Ovary (tissue), 10 donors: ENCODE measurements at regions of chr1 and their contacts with region 1.

Region 1: DNA sequence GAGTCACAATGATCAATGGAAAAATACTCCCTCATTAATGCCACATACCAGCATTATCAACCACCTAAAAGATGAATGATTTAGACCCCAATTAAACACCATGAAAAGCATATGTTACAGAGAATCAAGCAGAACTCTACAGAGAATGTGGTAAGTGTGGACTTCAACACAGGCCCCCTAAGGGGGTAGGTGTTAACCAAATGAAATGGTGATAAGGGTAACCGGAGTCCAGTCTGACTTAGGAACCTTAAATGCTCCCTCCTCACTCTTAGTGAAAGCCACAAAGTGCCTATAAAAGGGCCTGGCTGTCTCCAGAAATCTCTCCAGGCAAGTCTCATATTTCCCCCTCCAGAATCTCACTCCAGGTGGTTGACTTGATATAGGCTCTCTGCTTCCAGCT is 149.2 kb upstream of the FOXD3 start:
- DNase-seq: no peak
- H3K4me3 ChIP-seq: no peak overlapping the region
- H3K27ac ChIP-seq: no peak overlapping the region
- H3K4me1 ChIP-seq: no peaks in the 10 kb centered on the region
- H3K27me3 ChIP-seq: no peaks in the 10 kb centered on the region
- CTCF ChIP-seq: no peak
- EP300 ChIP-seq: no peak
- POLR2A ChIP-seq: no peak

Region 2: DNA sequence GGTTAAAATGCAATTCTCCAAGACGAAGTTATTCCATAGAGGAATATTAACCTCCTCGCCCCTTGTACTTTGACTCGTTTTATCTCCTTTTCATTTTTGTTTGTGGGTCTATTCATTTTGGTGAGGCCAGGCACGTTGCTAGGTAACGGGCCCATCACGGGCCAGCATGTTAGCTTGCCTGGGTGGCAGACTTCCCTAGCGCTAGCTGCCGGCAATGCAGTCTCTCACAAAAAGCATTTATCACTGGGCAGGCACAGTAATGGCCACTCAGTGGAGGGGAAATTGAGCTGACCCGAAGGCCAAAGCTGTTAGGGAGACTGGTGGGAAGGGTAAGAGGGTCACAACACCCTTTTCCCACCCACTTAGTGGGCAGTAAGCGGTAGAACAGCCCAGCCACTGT is 85.2 kb before region 1 on chr1:
- intact Hi-C with region 1: no loop called
- DNase-seq: no peak
- H3K4me3 ChIP-seq: no peak overlapping the region
- H3K27ac ChIP-seq: no peak overlapping the region
- H3K4me1 ChIP-seq: no peaks in the 10 kb centered on the region
- H3K27me3 ChIP-seq: no peaks in the 10 kb centered on the region
- CTCF ChIP-seq: no peak
- EP300 ChIP-seq: no peak
- POLR2A ChIP-seq: no peak

Region 3: GRCh38 chr1:63099188-63099587 is 74.0 kb before region 1 on chr1:
- intact Hi-C with region 1: loop called in 1 of 4 experiments (anchors 2 kb)
- DNase-seq: no peak
- H3K4me3 ChIP-seq: no peak overlapping the region
- H3K27ac ChIP-seq: no peak overlapping the region
- H3K4me1 ChIP-seq: no peaks in the 10 kb centered on the region
- H3K27me3 ChIP-seq: no peaks in the 10 kb centered on the region
- CTCF ChIP-seq: no peak
- EP300 ChIP-seq: no peak
- POLR2A ChIP-seq: no peak

Region 4: GRCh38 chr1:63935143-63935542 is 762.0 kb after region 1 on chr1:
- intact Hi-C with region 1: no loop called
- DNase-seq: no peak
- H3K4me3 ChIP-seq: no peak overlapping the region
- H3K27ac ChIP-seq: no peak overlapping the region
- H3K4me1 ChIP-seq: no peaks in the 10 kb centered on the region
- H3K27me3 ChIP-seq: no peaks in the 10 kb centered on the region
- CTCF ChIP-seq: no peak
- EP300 ChIP-seq: no peak
- POLR2A ChIP-seq: no peak